ENCODE measurements at regions of chr4 and their contacts with region 1.

Region 1: GRCh38 chr4:158778156-158778711 is 9.4 kb downstream of the FNIP2 start:
- H3K4me3 Mint-ChIP-seq: peak overlapping the region; percentile 37
- H3K27ac Mint-ChIP-seq: peak overlapping the region; percentile 67
- H3K4me1 Mint-ChIP-seq: peaks cover 66% of the 10 kb centered on the region
- H3K27me3 Mint-ChIP-seq: no peaks in the 10 kb centered on the region

Region 2: DNA sequence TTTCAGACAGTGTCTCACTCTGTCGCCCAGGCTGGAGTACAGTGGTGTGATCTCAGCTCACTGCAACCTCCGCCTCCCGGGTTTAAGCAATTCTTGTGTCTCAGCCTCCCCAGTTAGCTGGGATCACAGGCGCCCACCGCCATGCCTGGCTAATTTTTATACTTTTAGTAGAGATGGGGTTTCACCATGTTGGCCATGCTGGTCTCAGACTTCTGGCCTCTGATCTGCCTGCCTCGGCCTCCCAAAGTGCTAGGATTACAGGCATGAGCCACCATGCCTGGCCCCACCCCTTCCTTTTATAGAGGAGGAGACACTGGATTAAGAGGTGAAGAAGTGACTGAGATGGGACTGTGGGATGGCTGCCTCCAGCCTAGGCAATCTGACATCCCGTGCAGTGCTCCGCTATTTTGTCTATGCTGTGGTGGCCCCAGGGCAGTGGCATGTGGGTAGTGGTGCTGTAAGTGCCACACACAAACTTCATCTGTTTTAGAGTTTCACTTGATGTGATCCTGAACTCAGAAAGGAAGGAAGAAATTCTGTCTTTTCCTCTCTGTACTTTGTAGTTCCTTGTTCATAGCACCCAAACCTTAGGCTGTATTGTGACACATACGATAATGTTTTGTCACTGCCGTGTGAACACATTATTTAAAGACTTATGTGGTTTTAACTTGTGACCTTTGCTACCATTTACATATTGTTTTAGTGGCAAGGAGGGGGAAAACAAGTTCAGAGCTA is 39.5 kb after region 1 on chr4:
- intact Hi-C with region 1: loop called (anchors 5 kb)
- H3K4me3 Mint-ChIP-seq: no peak overlapping the region
- H3K27ac Mint-ChIP-seq: peak overlapping the region; percentile 76
- H3K4me1 Mint-ChIP-seq: peaks cover 87% of the 10 kb centered on the region
- H3K27me3 Mint-ChIP-seq: no peaks in the 10 kb centered on the region